Esophagus muscularis mucosa (tissue), 4 donors: ENCODE measurements at regions of chr10 and their contacts with region 1.

Region 1: DNA sequence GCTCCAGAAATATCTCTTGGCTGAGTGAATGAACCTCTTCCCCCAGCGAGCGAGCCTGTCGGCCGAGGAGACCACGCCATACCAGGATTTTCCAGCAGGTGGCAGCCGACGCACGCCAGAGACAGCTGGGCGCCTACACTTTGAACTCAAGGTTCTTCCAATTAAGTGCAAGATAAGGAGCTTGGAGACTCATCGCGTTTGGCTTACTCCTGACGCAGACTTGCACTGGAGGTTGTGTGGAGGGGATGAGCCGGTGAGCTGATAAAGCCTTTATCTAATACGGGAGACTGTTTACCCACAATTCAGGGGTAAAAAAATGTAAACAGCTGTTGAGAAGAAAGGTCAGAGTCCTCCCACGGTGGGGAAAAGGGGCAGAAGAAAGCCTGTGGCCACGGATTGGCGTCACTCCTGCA is 45.9 kb upstream of the EMX2 start:
- DNase-seq: peak; percentile 95
- H3K4me3 ChIP-seq: no peak overlapping the region
- H3K27ac ChIP-seq: no peak overlapping the region
- H3K4me1 ChIP-seq: peaks cover 0 to 7% (median 2%) of the 10 kb centered on the region in 4 donors
- H3K27me3 ChIP-seq: peaks cover 0 to 40% (median 0%) of the 10 kb centered on the region in 4 donors
- CTCF ChIP-seq: peak; percentile 90 to 97 (median 91)
- EP300 ChIP-seq: no peak
- POLR2A ChIP-seq: no peak

Region 2: GRCh38 chr10:116272440-116273283 is 1224.0 kb before region 1 on chr10 and contains the start of gene GFRA1:
- intact Hi-C with region 1: no loop called
- DNase-seq: no peak
- H3K4me3 ChIP-seq: peak within 1 kb of the TSS; percentile 59 to 68 (median 63)
- H3K27ac ChIP-seq: peak within 1 kb of the TSS; percentile 70 to 80 (median 74)
- H3K4me1 ChIP-seq: peaks cover 15 to 55% (median 46%) of the 10 kb centered on the region in 4 donors
- H3K27me3 ChIP-seq: peaks cover 0 to 89% (median 22%) of the 10 kb centered on the region in 4 donors
- CTCF ChIP-seq: peak in 1 of 3 experiments; percentile 15
- EP300 ChIP-seq: no peak
- POLR2A ChIP-seq: no peak
- total RNA-seq, gene GFRA1: 44.0 to 73.4 (median 64.5) TPM

Region 3: DNA sequence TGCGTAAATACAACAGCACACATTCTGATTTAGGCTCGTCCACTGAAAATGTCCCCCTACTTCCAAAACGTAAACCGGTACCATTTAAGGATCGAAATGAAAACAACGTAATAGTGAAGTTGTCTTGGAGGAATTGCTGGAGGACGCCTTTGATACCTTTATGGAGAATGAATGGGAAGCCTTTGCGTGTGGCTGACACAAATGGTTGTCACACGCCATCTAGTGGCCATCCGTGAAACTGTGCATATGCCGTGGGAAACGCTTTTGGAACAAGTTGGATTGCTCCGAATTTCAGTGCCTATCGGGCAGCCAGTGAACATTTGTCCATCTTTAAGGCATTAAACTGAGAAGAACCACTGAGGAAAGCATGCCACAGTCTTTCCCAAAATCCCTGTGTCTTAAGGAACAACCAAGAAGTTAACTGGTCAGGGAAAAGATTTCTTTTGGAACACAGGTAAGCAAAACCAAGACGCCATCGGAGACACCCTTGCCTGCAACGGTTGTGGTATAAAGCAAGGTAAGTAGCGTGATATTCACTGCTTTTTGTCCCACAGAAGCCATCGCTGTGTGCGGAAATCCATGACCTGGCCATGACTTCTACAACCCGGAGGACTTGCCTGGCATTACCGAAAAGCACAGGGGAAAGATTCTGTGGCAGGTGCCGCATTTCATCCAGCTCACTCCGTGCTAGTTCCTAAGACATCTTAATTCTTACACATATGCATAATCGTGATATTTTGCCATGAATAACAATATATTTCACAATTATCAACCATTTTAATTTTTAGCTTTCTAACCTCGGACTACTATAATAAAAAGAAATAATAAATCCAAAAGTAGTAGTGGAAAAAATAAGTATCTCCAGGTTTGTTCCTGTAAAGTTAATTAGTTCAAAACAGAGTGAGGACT is 744.9 kb after region 1 on chr10:
- intact Hi-C with region 1: loop called (anchors 2 kb)
- DNase-seq: peak; percentile 95
- H3K4me3 ChIP-seq: no peak overlapping the region
- H3K27ac ChIP-seq: no peak overlapping the region
- H3K4me1 ChIP-seq: peaks cover 0 to 7% (median 3%) of the 10 kb centered on the region in 4 donors
- H3K27me3 ChIP-seq: peaks cover 0 to 73% (median 10%) of the 10 kb centered on the region in 4 donors
- CTCF ChIP-seq: peak; percentile 86 to 94 (median 93)
- EP300 ChIP-seq: no peak
- POLR2A ChIP-seq: no peak

Region 4: DNA sequence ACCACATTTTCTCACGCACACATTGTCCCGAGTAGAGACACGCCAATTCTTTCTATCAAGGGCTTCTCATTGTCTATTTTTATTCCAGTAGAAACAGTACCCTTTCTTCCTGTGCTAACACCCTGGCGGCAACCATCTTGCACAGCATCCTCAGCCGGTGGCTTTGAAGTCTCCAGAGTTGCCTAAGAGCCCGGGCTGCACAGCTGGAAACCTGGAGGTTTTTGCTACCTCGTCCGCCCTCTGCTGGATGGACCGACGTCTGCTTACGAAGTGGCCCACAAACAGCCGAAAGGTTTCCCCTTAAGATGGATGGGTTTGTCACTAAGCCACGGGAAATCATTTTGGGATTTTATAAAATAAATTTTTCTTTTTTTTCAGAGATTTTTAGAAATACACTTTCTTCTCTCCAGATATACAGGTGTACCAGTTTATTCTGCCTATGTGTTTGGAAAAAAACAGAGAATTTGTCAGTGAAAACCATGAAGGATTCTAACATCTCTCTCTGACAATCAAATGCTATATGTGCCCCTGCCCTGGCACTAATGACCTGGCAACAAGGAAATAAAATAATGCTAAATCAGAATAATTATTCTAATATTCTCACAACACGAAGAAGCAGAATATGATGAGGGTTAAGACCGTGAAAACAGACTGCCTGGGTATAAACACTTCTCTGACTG is 927.3 kb after region 1 on chr10:
- intact Hi-C with region 1: loop called (anchors 10 kb)
- DNase-seq: peak; percentile 95
- H3K4me3 ChIP-seq: no peak overlapping the region
- H3K27ac ChIP-seq: no peak overlapping the region
- H3K4me1 ChIP-seq: no peaks in the 10 kb centered on the region
- H3K27me3 ChIP-seq: peaks cover 0 to 6% (median 0%) of the 10 kb centered on the region in 4 donors
- CTCF ChIP-seq: peak; percentile 32 to 74 (median 38)
- EP300 ChIP-seq: no peak
- POLR2A ChIP-seq: no peak

Region 5: DNA sequence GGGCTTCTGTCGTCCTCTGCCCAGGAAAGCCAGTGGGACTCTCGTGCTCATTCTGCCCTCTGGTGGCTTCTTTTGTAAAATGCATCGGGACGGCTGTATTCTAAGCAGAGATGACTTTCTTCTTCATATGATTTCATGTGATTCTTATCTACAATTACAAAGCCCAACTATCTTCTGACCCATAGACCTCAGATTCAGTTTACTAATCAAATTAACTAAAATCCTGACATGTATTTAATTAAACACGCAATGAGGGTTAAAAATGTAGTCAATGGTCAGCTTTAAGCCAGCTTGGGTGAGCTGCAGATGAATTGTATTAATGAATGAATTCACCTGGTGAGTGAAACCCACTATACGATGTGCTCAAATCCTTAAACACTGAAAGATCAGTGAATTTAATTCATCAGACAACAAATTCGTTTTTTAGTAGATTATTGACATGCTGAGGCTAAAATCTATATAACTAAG is 963.1 kb after region 1 on chr10:
- intact Hi-C with region 1: loop called (anchors 10 kb)
- DNase-seq: peak; percentile 93
- H3K4me3 ChIP-seq: no peak overlapping the region
- H3K27ac ChIP-seq: no peak overlapping the region
- H3K4me1 ChIP-seq: peaks cover 0 to 3% (median 0%) of the 10 kb centered on the region in 4 donors
- H3K27me3 ChIP-seq: peaks cover 0 to 29% (median 0%) of the 10 kb centered on the region in 4 donors
- CTCF ChIP-seq: peak; percentile 63 to 77 (median 64)
- EP300 ChIP-seq: no peak
- POLR2A ChIP-seq: no peak